ENCODE measurements at regions of chr14 and their contacts with region 1.

Region 1: DNA sequence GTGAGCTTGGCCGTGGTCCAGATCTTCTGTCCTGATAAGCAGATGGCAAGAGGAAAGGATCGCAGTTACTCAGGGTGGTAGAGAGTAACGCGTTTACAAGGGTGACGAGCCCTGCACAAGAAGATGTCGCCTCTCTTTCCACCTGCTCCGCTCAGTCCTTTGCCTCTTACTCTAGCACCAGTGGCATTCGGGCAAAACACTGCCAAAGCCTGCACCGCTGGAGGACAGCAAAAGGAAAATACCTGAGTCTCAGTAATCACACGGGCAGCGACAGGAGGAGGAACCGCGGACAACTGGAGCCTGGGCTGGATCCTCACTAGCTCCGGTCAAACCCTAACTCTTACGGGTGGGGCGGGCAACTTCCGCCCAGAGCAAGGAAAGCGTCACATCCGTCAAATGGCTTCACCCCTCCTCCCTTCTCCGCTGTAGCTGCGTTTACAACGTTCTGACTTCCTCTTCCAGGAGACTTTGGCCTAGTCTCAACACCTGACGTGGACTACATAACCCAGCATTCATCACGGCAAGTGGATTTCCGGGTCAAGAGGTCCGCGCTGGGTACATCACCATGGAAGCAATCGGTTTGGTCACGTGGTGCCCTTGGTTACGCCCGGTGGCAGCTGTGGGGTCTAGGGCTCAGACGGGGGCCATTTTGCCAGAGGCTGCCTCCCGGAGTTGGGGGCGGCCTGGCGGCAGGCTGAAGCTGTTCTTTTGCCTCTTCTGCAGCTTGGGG is at the starts of genes KLHL28 and TOGARAM1:
- DNase-seq: peak; percentile 90 to 100 (median 94)
- ATAC-seq: peak; percentile 88
- H3K4me3 ChIP-seq: peak within 1 kb of the TSS; percentile 91
- H3K4me3 Mint-ChIP-seq: no peak within 1 kb of the TSS
- H3K27ac ChIP-seq: peak within 1 kb of the TSS; percentile 93 to 97
- H3K27ac Mint-ChIP-seq: no peak within 1 kb of the TSS
- H3K4me1 ChIP-seq: peaks cover 34% of the 10 kb centered on the region
- H3K4me1 Mint-ChIP-seq: peaks cover 62% of the 10 kb centered on the region
- H3K27me3 ChIP-seq: no peaks in the 10 kb centered on the region
- H3K27me3 Mint-ChIP-seq: no peaks in the 10 kb centered on the region
- CTCF ChIP-seq: no peak
- total RNA-seq, gene KLHL28: 49.3 to 49.7 TPM
- total RNA-seq, gene TOGARAM1: 13.2 to 17.8 TPM

Region 2: DNA sequence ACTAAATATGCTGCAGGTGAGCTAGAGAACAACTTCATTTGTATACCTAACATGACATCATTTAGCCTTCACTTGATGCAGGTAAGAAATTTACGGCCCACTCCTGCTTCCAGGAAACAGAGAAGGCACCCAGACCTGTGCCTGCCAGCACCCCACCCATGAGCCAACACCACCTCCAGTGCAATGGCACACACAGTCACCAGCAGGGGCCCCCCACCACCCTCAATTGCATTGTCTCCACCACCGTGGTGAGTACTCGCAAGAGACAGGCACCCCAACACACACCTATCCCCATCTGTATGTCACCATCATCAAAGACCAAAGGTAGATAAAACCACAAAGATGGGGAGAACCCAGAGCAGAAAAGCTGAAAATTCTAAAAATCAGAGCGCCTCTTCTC is 107.7 kb before region 1 on chr14:
- CTCF ChIA-PET with region 1: no interaction called
- POLR2A ChIA-PET with region 1: no interaction called
- intact Hi-C with region 1: no loop called
- DNase-seq: peak in 3 of 14 experiments; percentile 4 to 11 (median 8)
- ATAC-seq: no peak
- H3K4me3 ChIP-seq: no peak overlapping the region
- H3K4me3 Mint-ChIP-seq: no peak overlapping the region
- H3K27ac ChIP-seq: no peak overlapping the region
- H3K27ac Mint-ChIP-seq: no peak overlapping the region
- H3K4me1 ChIP-seq: no peaks in the 10 kb centered on the region
- H3K4me1 Mint-ChIP-seq: no peaks in the 10 kb centered on the region
- H3K27me3 ChIP-seq: no peaks in the 10 kb centered on the region
- H3K27me3 Mint-ChIP-seq: peaks cover 51% of the 10 kb centered on the region
- CTCF ChIP-seq: no peak

Region 3: DNA sequence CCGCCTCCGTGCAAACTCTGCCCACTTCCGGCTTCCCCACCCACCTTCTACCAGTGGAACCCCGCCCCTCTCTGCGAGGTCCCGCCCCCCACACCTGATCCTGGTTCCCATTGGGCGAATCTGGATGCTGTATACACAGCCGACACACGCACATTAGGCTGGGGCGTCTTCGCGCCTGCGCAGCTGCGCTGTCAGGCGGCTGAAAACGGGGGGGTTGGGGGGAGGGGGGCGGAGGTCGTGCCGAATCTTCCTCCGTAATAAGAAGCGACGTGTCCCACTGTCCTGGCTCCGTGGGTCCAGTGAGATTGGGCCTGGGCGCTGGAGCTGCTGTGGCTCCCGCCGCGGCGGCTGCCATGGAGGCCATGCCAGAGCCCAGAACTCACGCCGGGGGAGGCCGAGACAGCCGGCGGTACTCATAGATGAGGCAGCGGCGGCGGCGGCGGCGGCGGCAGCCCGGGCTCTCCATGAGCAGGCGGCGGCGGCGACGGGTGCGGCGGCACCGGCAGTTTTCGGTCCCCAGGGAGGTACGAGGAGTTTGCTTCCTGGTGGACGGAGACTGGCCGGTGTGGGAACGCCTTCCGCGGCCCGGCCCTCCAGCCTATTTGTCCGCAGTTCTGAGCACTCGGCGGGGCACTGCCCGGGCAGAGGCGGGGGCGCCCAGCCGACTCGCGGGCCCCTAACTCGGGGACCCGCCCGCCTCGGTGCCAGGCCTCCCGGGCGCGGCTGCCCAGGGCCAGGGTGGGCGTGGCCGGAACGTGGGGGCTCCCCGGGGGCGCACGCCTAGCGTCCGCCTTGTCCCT is 64.5 kb before region 1 on chr14:
- CTCF ChIA-PET with region 1: no interaction called
- POLR2A ChIA-PET with region 1: interaction called, 119 read pairs
- intact Hi-C with region 1: loop called (anchors 1 to 2 kb)
- DNase-seq: peak; percentile 95 to 99 (median 98)
- ATAC-seq: peak; percentile 97
- H3K4me3 ChIP-seq: peak overlapping the region; percentile 69
- H3K4me3 Mint-ChIP-seq: peak overlapping the region; percentile 95
- H3K27ac ChIP-seq: peak overlapping the region; percentile 85
- H3K27ac Mint-ChIP-seq: peak overlapping the region; percentile 96
- H3K4me1 ChIP-seq: peaks cover 10% of the 10 kb centered on the region
- H3K4me1 Mint-ChIP-seq: peaks cover 39% of the 10 kb centered on the region
- H3K27me3 ChIP-seq: no peaks in the 10 kb centered on the region
- H3K27me3 Mint-ChIP-seq: no peaks in the 10 kb centered on the region
- CTCF ChIP-seq: no peak

Region 4: GRCh38 chr14:44945264-44945663 is 16.5 kb before region 1 on chr14:
- CTCF ChIA-PET with region 1: interaction called, 3 read pairs
- POLR2A ChIA-PET with region 1: interaction called, 4 read pairs
- intact Hi-C with region 1: loop called in 1 of 2 experiments (anchors 2 kb)
- DNase-seq: no peak
- ATAC-seq: no peak
- H3K4me3 ChIP-seq: no peak overlapping the region
- H3K4me3 Mint-ChIP-seq: no peak overlapping the region
- H3K27ac ChIP-seq: no peak overlapping the region
- H3K27ac Mint-ChIP-seq: no peak overlapping the region
- H3K4me1 ChIP-seq: peaks cover 7% of the 10 kb centered on the region
- H3K4me1 Mint-ChIP-seq: peaks cover 63% of the 10 kb centered on the region
- H3K27me3 ChIP-seq: no peaks in the 10 kb centered on the region
- H3K27me3 Mint-ChIP-seq: no peaks in the 10 kb centered on the region
- CTCF ChIP-seq: no peak

Region 5: DNA sequence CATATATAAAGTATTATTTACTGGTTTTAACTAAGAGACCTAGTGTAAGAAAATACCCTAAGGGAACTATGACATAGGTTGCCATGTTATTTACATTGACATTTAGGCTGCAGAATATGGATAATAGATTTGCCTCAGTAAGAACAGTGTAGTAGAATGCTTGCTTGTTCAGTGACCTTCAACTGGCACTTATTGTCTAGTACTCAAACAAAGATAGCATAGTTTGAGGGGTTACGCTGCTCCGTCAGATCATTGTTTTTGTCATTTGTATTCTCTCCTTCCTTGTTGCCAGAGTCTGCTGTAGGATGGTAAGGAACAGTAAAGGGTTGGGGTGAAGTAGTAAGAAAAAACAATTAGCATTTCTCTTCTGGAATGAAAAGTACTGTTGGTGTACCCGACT is 33.4 kb after region 1 on chr14:
- CTCF ChIA-PET with region 1: no interaction called
- POLR2A ChIA-PET with region 1: no interaction called
- intact Hi-C with region 1: no loop called
- DNase-seq: no peak
- ATAC-seq: no peak
- H3K4me3 ChIP-seq: no peak overlapping the region
- H3K4me3 Mint-ChIP-seq: no peak overlapping the region
- H3K27ac ChIP-seq: no peak overlapping the region
- H3K27ac Mint-ChIP-seq: no peak overlapping the region
- H3K4me1 ChIP-seq: no peaks in the 10 kb centered on the region
- H3K4me1 Mint-ChIP-seq: peaks cover 4% of the 10 kb centered on the region
- H3K27me3 ChIP-seq: no peaks in the 10 kb centered on the region
- H3K27me3 Mint-ChIP-seq: no peaks in the 10 kb centered on the region
- CTCF ChIP-seq: no peak

Region 6: GRCh38 chr14:45128963-45129629 is 167.3 kb after region 1 on chr14:
- CTCF ChIA-PET with region 1: interaction called, 7 read pairs
- POLR2A ChIA-PET with region 1: interaction called, 111 read pairs
- intact Hi-C with region 1: loop called in 1 of 2 experiments (anchors 1 kb)
- DNase-seq: no peak
- ATAC-seq: no peak
- H3K4me3 ChIP-seq: no peak overlapping the region
- H3K4me3 Mint-ChIP-seq: no peak overlapping the region
- H3K27ac ChIP-seq: no peak overlapping the region
- H3K27ac Mint-ChIP-seq: no peak overlapping the region
- H3K4me1 ChIP-seq: peaks cover 9% of the 10 kb centered on the region
- H3K4me1 Mint-ChIP-seq: peaks cover 37% of the 10 kb centered on the region
- H3K27me3 ChIP-seq: no peaks in the 10 kb centered on the region
- H3K27me3 Mint-ChIP-seq: no peaks in the 10 kb centered on the region
- CTCF ChIP-seq: no peak

Region 7: DNA sequence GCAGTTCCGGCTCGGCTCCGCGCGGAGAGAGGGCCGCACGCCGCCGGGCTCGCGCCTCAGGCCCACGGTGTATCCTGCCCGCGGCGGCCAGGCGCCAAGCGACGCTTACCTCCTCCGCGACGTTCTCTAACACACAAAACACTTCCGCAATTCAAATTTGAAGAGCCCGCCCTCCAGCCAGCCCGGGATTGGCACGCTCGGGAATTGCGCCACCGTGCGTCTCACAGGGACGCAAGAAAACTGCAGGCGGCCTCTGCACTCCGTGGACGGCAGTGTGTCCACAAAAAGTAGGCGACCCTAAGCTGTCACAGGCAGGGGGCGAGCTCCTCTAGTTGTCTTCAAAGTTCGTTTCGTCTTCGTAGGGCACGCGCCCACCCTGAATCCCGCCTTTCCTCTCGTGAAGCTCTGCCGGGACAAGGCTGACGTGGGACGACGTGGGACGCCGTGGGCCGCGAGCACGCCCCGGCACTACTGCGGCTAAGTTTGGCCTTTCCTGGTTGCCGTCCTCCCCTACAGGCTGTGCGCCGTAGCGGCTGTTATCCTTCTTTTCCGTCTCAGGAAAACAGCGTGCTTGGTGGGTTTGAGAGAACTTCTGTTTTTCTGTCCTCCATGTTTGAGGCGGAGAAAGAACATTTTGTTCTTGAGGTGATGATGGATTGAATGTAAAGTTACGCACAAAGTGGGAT is 291.4 kb after region 1 on chr14 and contains the start of gene MIS18BP1:
- CTCF ChIA-PET with region 1: interaction called, 11 read pairs
- POLR2A ChIA-PET with region 1: interaction called, 38 read pairs
- intact Hi-C with region 1: loop called (anchors 1 to 2 kb)
- DNase-seq: peak; percentile 86 to 97 (median 92)
- ATAC-seq: peak; percentile 91
- H3K4me3 ChIP-seq: peak within 1 kb of the TSS; percentile 75
- H3K4me3 Mint-ChIP-seq: peak within 1 kb of the TSS; percentile 95
- H3K27ac ChIP-seq: peak within 1 kb of the TSS; percentile 69 to 84
- H3K27ac Mint-ChIP-seq: peak within 1 kb of the TSS; percentile 95
- H3K4me1 ChIP-seq: peaks cover 28% of the 10 kb centered on the region
- H3K4me1 Mint-ChIP-seq: peaks cover 28% of the 10 kb centered on the region
- H3K27me3 ChIP-seq: no peaks in the 10 kb centered on the region
- H3K27me3 Mint-ChIP-seq: no peaks in the 10 kb centered on the region
- CTCF ChIP-seq: peak; percentile 82
- total RNA-seq, gene MIS18BP1: 20.1 to 20.3 TPM

Region 8: DNA sequence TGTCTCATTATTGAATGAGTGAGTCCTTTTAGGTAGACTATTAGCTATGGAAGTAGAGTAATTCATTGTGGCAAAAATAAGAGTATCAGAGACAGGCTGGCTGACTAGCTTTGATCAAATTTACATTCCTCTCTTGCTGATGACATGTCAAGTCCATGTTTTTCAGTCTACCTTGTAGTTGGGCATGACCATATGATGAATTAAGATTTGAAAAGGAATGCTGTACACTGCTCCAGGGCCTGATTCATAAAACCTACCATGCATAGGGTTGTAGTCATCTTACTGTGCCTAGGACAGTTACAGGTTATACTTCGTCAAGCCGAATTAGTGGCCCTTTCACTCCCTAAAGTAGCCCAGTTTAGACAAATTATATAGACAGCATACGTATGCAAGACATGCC is 836.9 kb after region 1 on chr14:
- CTCF ChIA-PET with region 1: no interaction called
- POLR2A ChIA-PET with region 1: no interaction called
- intact Hi-C with region 1: no loop called
- DNase-seq: no peak
- ATAC-seq: no peak
- H3K4me3 ChIP-seq: no peak overlapping the region
- H3K4me3 Mint-ChIP-seq: no peak overlapping the region
- H3K27ac ChIP-seq: no peak overlapping the region
- H3K27ac Mint-ChIP-seq: no peak overlapping the region
- H3K4me1 ChIP-seq: no peaks in the 10 kb centered on the region
- H3K4me1 Mint-ChIP-seq: no peaks in the 10 kb centered on the region
- H3K27me3 ChIP-seq: no peaks in the 10 kb centered on the region
- H3K27me3 Mint-ChIP-seq: no peaks in the 10 kb centered on the region
- CTCF ChIP-seq: no peak

Measured in CD4-positive, alpha-beta T cell (primary cell).